ENCODE measurements at regions of chr15 and their contacts with region 1.

Region 1: DNA sequence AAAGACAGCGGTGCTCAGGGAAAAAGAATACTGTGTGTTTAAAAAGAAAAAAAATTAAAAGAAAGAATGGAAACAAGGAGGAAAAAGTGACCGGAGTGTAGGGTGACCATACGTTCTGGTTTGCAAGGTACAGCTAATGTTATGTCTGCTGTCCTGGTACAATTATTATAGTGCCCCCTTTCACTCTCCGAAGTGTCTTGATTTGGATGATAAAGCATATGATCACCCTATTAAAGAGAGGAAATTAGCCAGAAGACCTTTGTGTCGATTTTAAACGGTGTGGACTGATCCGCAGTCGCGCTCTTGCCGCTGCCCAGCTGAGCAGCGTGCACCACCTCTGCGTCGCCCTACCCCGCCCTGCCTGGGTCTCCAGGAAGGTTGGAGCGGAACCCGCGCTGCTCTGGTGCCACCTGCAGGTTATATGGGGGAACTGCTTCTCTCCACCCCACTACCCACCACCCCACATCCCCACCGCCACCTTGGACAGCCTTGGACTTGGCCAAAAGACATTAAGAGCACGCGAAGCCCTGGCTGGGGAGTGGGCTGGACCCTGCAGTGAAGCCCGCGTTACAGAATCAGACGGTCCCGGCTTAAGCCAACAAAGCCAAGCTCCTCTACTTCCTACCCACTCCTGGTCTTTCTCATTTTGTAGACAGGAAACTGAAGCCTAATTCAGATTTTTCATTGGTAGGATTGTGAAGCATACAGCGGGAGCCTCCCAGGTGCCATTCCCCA is 41.2 kb upstream of the UBE2Q2 start:
- DNase-seq: peak; percentile 83
- H3K4me3 Mint-ChIP-seq: peak overlapping the region; percentile 38
- H3K27ac Mint-ChIP-seq: no peak overlapping the region
- H3K4me1 Mint-ChIP-seq: no peaks in the 10 kb centered on the region
- H3K27me3 Mint-ChIP-seq: peaks cover 26% of the 10 kb centered on the region
- CTCF ChIP-seq: peak; percentile 92

Region 2: DNA sequence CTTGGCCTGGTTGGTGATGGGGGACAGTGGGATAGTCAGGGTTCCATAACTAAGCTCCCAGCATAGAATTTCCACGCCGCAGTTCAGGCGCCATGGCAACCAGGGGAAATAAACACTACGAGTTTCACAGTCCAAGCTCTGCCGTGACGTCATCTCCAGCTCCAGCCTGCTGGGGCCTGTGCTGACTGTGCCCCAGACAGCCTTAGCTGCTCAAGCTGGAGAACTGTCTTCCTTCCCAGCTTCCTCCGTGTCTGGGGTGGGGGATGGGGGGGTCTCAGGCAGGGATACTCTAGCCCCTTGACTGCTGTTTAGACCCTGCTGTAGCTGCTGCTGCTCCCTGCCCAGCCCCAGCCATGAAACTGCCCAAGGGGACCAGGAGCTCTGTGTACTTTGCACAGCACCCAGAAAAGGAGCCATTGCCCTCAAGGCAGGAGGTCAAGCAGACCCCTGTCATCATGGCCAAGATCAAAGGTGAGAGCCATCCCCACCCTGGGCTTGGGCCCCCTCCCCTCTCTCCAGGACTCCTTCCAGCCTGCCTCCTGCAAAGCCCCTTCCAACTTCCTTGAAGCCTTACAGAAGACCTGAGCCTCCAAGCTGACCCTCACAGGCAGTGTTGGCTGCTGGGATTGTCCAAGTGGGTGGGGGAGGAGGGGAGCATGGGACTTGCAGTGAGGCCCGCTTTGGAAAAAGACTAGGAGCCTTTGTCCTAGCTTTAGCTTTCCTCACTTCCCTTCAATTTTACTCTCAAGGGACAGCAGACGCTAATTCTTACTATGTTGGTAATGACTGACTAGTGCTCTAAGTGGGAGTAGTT is 78.0 kb before region 1 on chr15:
- CTCF ChIA-PET with region 1: interaction called, 21 read pairs
- POLR2A ChIA-PET with region 1: interaction called, 3 read pairs
- intact Hi-C with region 1: loop called (anchors 1 kb)
- DNase-seq: peak; percentile 75
- H3K4me3 Mint-ChIP-seq: no peak overlapping the region
- H3K27ac Mint-ChIP-seq: peak overlapping the region; percentile 86
- H3K4me1 Mint-ChIP-seq: peaks cover 10% of the 10 kb centered on the region
- H3K27me3 Mint-ChIP-seq: no peaks in the 10 kb centered on the region
- CTCF ChIP-seq: no peak

Region 3: DNA sequence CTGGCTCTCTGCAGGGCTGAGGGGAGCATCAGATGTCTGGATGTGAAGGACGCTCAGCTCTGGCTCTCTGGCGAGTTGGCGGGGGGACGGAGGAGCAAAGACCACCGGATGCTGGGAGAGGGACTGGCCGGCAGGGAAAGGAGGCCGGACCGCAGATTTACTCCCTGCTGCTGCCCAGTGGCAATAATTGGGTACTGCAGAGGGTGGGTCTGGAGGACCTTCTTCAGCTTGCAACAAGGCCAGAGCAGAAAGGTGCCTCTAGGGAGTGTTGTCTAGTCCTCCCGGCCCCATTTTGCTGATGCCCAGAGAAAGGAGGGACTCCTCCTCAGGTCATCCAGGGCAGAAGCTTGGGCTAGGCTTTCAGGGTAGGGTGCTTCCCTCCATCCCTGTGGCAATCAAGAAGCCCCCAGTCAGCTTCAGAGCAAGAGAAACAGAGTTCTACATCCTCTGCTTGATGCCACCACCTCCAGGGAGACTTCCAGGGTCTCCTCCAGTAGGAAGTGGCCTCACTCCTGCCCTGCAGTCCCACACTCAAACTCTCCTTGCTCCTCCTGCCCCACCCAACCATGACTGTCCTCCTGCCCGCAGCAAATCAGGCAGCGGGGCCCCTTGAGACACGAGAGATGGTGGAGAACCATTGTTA is 69.1 kb before region 1 on chr15:
- CTCF ChIA-PET with region 1: interaction called, 11 read pairs
- POLR2A ChIA-PET with region 1: no interaction called
- intact Hi-C with region 1: loop called (anchors 1 kb)
- DNase-seq: peak; percentile 64
- H3K4me3 Mint-ChIP-seq: no peak overlapping the region
- H3K27ac Mint-ChIP-seq: no peak overlapping the region
- H3K4me1 Mint-ChIP-seq: peaks cover 6% of the 10 kb centered on the region
- H3K27me3 Mint-ChIP-seq: no peaks in the 10 kb centered on the region
- CTCF ChIP-seq: peak; percentile 83

Region 4: GRCh38 chr15:75770131-75770530 is 31.9 kb before region 1 on chr15:
- CTCF ChIA-PET with region 1: no interaction called
- POLR2A ChIA-PET with region 1: no interaction called
- intact Hi-C with region 1: no loop called
- DNase-seq: no peak
- H3K4me3 Mint-ChIP-seq: no peak overlapping the region
- H3K27ac Mint-ChIP-seq: no peak overlapping the region
- H3K4me1 Mint-ChIP-seq: no peaks in the 10 kb centered on the region
- H3K27me3 Mint-ChIP-seq: no peaks in the 10 kb centered on the region
- CTCF ChIP-seq: no peak

Region 5: GRCh38 chr15:75817138-75817935 is 15.3 kb after region 1 on chr15:
- CTCF ChIA-PET with region 1: interaction called, 11 read pairs
- POLR2A ChIA-PET with region 1: no interaction called
- intact Hi-C with region 1: no loop called
- DNase-seq: no peak
- H3K4me3 Mint-ChIP-seq: no peak overlapping the region
- H3K27ac Mint-ChIP-seq: no peak overlapping the region
- H3K4me1 Mint-ChIP-seq: no peaks in the 10 kb centered on the region
- H3K27me3 Mint-ChIP-seq: no peaks in the 10 kb centered on the region
- CTCF ChIP-seq: no peak